Mammary epithelial cell (primary cell): ENCODE measurements at regions of chr1 and their contacts with region 1.

Region 1: DNA sequence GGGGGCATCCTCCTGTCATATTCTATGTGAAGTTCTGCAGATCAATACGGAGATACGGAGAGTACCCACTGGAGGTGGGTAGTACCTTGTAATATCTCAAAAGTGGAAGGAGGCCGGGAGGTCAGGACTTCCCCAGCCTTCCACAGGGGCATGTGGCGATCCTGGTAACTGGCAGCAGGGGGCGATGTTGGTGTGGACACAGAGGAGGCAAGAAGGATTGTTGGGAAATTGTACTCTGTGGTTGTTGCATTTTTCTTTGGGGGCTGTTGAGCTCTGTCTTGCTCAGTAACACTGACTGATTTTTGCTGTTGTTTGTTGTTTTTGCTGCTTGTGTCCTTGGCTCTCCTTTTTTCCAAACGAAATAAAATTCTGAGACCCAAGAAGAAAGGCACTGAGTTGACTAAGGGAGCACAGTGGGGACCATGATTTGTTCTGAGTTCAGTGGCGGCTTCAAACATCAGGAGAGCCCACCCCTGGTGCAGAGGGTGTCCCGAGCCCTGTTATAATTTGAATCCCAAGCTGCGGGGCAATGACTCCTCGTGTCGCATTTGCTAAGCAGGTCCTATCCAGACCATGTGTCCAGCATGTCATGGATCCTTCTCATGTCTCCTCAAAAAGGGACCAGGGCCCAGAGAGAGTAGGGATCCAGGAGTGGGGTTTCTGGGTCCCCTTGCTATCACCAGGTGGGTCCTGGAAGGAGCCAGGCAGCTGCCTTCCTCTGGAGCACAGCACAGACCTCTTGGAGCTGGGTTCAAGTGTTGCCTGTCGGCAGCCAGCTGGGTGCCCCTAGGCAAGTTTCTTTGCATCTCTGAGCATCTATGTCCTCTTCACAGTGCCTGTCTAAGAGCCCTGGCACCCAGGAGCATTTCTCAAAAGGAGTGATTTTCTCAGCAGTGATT is 22.8 kb downstream of the LHX4 start:
- DNase-seq: peak; percentile 47
- H3K4me3 ChIP-seq: no peak overlapping the region
- H3K27ac ChIP-seq: no peak overlapping the region
- H3K4me1 ChIP-seq: no peaks in the 10 kb centered on the region
- H3K27me3 ChIP-seq: no peaks in the 10 kb centered on the region
- CTCF ChIP-seq: peak; percentile 92 to 93

Region 2: DNA sequence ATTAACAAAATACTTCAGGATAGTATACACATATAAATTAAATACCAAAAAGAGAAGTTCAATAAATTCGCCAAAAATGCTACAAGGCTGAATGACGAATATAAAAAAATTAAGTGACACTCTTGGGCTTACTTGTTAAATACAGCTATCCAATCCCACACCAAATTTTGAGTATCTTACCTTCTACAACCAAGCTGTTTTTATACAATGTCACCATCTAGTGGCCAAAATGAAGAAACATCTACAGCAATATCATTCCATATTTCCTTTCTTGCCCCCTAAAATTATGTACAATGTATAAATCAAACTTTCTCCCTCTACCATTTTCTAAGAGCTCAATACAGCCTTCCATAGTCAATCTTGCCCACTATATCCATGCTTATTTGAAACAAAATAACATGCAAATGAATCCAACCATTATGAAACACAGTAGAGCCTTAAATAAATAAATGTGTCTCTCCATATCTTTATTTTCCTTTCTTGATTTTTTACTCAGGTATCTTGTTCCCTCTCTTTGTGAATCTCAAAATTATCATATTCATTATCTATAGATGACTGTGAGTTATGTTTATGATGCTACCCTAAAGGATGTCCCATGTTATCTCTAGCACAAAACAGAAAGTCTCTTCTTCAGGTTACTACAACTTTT is 163.2 kb after region 1 on chr1:
- CTCF ChIA-PET with region 1: no interaction called
- dilution Hi-C with region 1: no loop called
- in situ Hi-C with region 1: loop called in 1 of 2 experiments (anchors 10 kb)
- intact Hi-C with region 1: loop called (anchors 1 kb)
- DNase-seq: peak; percentile 8
- H3K4me3 ChIP-seq: no peak overlapping the region
- H3K27ac ChIP-seq: no peak overlapping the region
- H3K4me1 ChIP-seq: no peaks in the 10 kb centered on the region
- H3K27me3 ChIP-seq: no peaks in the 10 kb centered on the region
- CTCF ChIP-seq: peak; percentile 54 to 63

Region 3: GRCh38 chr1:180482425-180483275 is 229.8 kb after region 1 on chr1:
- CTCF ChIA-PET with region 1: no interaction called
- dilution Hi-C with region 1: no loop called
- in situ Hi-C with region 1: loop called in 1 of 2 experiments (anchors 5 kb)
- intact Hi-C with region 1: loop called (anchors 1 kb)
- DNase-seq: peak; percentile 41
- H3K4me3 ChIP-seq: peak overlapping the region in 1 of 3 experiments; percentile 22
- H3K27ac ChIP-seq: no peak overlapping the region
- H3K4me1 ChIP-seq: no peaks in the 10 kb centered on the region
- H3K27me3 ChIP-seq: no peaks in the 10 kb centered on the region
- CTCF ChIP-seq: peak; percentile 64 to 80